Naive thymus-derived CD4-positive, alpha-beta T cell (primary cell): ENCODE measurements at regions of chr2 and their contacts with region 1.

Region 1: DNA sequence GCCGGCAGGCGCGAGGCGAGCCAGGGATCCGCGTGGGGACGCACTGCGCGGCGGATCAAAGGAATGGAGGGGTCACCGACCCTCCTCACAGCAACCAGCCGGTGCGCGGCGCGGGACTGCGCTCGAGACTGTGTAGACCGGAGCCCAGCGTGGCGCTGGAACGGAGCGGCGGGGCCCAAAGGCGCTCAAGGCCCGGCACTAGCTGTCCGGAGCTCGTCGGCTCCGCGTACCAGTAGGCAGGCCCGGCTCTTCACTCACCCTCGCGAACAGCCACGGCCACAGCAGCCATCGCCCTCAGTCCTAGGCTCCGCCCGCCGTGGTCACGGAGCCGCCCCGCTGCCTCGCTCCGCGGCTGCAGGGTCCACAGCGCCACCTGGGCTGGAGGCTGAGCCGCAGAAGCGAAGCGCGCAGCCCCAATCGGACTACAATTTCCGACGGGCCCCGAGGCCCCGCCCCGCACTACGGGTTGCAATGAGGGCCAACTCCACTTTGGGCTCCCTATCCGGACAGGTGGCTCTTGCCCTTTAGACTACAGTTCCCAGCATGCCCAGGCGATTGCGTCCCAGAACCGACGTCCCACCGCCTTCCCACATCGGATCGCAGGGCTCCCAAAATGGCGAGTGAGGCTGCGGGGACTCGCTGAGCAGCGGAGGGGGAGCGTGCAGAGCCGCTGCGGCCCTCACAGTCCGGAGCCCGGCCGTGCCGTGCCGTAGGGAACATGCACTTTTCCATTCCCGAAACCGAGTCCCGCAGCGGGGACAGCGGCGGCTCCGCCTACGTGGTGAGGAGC is at the starts of genes EIF2B4 and SNX17:
- DNase-seq: peak; percentile 96 to 100 (median 99)
- ATAC-seq: peak; percentile 96
- H3K4me3 ChIP-seq: peak within 1 kb of the TSS; percentile 94
- H3K4me3 Mint-ChIP-seq: peak within 1 kb of the TSS; percentile 85 to 100 (median 96)
- H3K27ac ChIP-seq: peak within 1 kb of the TSS; percentile 93
- H3K27ac Mint-ChIP-seq: peak within 1 kb of the TSS; percentile 81 to 99 (median 95)
- H3K4me1 ChIP-seq: peaks cover 29 to 30% of the 10 kb centered on the region in 2 donors
- H3K4me1 Mint-ChIP-seq: peaks cover 29 to 53% (median 46%) of the 10 kb centered on the region in 7 donors
- H3K27me3 ChIP-seq: no peaks in the 10 kb centered on the region
- H3K27me3 Mint-ChIP-seq: no peaks in the 10 kb centered on the region
- total RNA-seq, gene EIF2B4: 36.5 to 56.1 (median 44.1) TPM
- total RNA-seq, gene SNX17: 71.0 to 128 (median 111) TPM

Region 2: GRCh38 chr2:26785431-26786206 is 584.6 kb before region 1 on chr2 and contains the start of gene CENPA:
- CTCF ChIA-PET with region 1: no interaction called
- POLR2A ChIA-PET with region 1: no interaction called
- intact Hi-C with region 1: loop called in 1 of 2 experiments (anchors 1 kb)
- DNase-seq: peak; percentile 86 to 98 (median 96)
- ATAC-seq: peak; percentile 100
- H3K4me3 ChIP-seq: peak within 1 kb of the TSS; percentile 78
- H3K4me3 Mint-ChIP-seq: peak within 1 kb of the TSS; percentile 81 to 97 (median 88)
- H3K27ac ChIP-seq: peak within 1 kb of the TSS; percentile 60
- H3K27ac Mint-ChIP-seq: peak within 1 kb of the TSS; percentile 65 to 97 (median 89)
- H3K4me1 ChIP-seq: peaks cover 0 to 4% of the 10 kb centered on the region in 2 donors
- H3K4me1 Mint-ChIP-seq: peaks cover 10 to 34% (median 11%) of the 10 kb centered on the region in 7 donors
- H3K27me3 ChIP-seq: no peaks in the 10 kb centered on the region
- H3K27me3 Mint-ChIP-seq: peaks cover 0 to 26% (median 24%) of the 10 kb centered on the region in 5 donors
- total RNA-seq, gene CENPA: 0.37 to 25.6 (median 0.73) TPM in 3 of 5 experiments, not detected in the others

Region 3: GRCh38 chr2:27086090-27086723 is 284.0 kb before region 1 on chr2:
- CTCF ChIA-PET with region 1: no interaction called
- POLR2A ChIA-PET with region 1: interaction called, 3 read pairs
- intact Hi-C with region 1: loop called (anchors 1 to 2 kb)
- DNase-seq: peak; percentile 94 to 100 (median 99)
- ATAC-seq: peak; percentile 96
- H3K4me3 ChIP-seq: peak overlapping the region; percentile 68
- H3K4me3 Mint-ChIP-seq: peak overlapping the region; percentile 75 to 91 (median 86)
- H3K27ac ChIP-seq: peak overlapping the region; percentile 90
- H3K27ac Mint-ChIP-seq: peak overlapping the region; percentile 30 to 91 (median 78)
- H3K4me1 ChIP-seq: peaks cover 18 to 22% of the 10 kb centered on the region in 2 donors
- H3K4me1 Mint-ChIP-seq: peaks cover 13 to 47% (median 29%) of the 10 kb centered on the region in 7 donors
- H3K27me3 ChIP-seq: no peaks in the 10 kb centered on the region
- H3K27me3 Mint-ChIP-seq: no peaks in the 10 kb centered on the region

Region 4: GRCh38 chr2:27264753-27265535 is 105.3 kb before region 1 on chr2:
- CTCF ChIA-PET with region 1: no interaction called
- POLR2A ChIA-PET with region 1: no interaction called
- intact Hi-C with region 1: loop called in 1 of 2 experiments (anchors 1 kb)
- DNase-seq: peak in 8 of 9 donors; percentile 39 to 63 (median 46)
- ATAC-seq: peak; percentile 85
- H3K4me3 ChIP-seq: peak overlapping the region; percentile 59
- H3K4me3 Mint-ChIP-seq: peak overlapping the region in 9 of 10 donors; percentile 59 to 97 (median 85)
- H3K27ac ChIP-seq: no peak overlapping the region
- H3K27ac Mint-ChIP-seq: peak overlapping the region in 2 of 9 donors; percentile 2 to 38
- H3K4me1 ChIP-seq: peaks cover 8 to 23% of the 10 kb centered on the region in 2 donors
- H3K4me1 Mint-ChIP-seq: peaks cover 23 to 33% (median 29%) of the 10 kb centered on the region in 7 donors
- H3K27me3 ChIP-seq: peaks cover 6 to 18% of the 10 kb centered on the region in 2 donors
- H3K27me3 Mint-ChIP-seq: peaks cover 34 to 47% (median 40%) of the 10 kb centered on the region in 5 donors

Region 5: DNA sequence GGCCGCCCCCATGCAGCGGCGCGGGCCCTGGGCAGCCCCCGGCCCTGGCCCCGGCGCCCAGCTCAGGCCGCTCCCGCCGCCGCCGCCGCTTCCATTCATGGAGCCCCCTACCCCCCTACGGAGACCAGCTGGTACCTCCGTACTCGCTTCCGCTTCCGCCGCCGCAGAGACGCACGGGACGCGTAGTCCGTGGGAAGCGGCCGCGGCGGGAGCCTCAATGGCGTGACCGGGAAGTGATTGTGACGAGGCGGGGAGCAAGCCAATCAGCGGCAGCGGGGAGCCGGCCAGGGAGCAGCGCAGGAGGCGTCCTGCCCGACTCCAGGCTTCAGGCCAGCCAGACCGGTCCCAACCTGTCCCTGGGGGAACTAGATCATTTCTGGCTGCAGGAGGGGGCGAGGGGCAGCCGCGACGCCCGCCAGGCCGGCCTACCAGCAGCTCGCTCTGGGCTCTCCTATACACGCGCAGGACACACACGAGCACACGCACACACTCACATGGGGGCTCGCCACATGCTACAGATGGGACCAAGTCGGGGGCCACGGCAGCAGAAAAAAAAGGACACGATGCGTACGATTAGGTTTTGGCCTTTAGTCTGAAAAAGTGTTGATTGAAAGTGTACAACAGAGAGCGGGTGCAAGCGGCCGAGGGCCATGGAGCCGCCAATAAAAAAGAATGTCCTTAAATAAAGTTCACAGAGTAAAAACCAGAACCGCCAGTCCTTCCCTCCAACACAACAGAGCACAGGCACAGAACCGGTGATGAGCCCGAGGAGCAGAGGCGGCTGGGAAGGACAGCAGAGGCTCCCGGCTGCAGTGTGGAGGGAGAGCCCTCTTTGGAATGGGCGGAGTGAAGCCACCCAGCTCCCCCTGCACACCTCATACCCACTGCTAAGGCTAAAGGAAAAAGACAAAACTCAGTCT is 10.7 kb after region 1 on chr2 and contains the start of gene ZNF513:
- CTCF ChIA-PET with region 1: interaction called, 10 read pairs
- POLR2A ChIA-PET with region 1: interaction called, 67 read pairs
- intact Hi-C with region 1: loop called (anchors 1 kb)
- DNase-seq: peak; percentile 71 to 88 (median 81)
- ATAC-seq: peak; percentile 97
- H3K4me3 ChIP-seq: peak within 1 kb of the TSS; percentile 67
- H3K4me3 Mint-ChIP-seq: peak within 1 kb of the TSS; percentile 85 to 94 (median 90)
- H3K27ac ChIP-seq: peak within 1 kb of the TSS; percentile 85
- H3K27ac Mint-ChIP-seq: peak within 1 kb of the TSS; percentile 88 to 97 (median 94)
- H3K4me1 ChIP-seq: peaks cover 9 to 10% of the 10 kb centered on the region in 2 donors
- H3K4me1 Mint-ChIP-seq: peaks cover 18 to 33% (median 30%) of the 10 kb centered on the region in 7 donors
- H3K27me3 ChIP-seq: no peaks in the 10 kb centered on the region
- H3K27me3 Mint-ChIP-seq: no peaks in the 10 kb centered on the region
- total RNA-seq, gene ZNF513: 15.6 to 23.2 (median 19.2) TPM

Region 6: DNA sequence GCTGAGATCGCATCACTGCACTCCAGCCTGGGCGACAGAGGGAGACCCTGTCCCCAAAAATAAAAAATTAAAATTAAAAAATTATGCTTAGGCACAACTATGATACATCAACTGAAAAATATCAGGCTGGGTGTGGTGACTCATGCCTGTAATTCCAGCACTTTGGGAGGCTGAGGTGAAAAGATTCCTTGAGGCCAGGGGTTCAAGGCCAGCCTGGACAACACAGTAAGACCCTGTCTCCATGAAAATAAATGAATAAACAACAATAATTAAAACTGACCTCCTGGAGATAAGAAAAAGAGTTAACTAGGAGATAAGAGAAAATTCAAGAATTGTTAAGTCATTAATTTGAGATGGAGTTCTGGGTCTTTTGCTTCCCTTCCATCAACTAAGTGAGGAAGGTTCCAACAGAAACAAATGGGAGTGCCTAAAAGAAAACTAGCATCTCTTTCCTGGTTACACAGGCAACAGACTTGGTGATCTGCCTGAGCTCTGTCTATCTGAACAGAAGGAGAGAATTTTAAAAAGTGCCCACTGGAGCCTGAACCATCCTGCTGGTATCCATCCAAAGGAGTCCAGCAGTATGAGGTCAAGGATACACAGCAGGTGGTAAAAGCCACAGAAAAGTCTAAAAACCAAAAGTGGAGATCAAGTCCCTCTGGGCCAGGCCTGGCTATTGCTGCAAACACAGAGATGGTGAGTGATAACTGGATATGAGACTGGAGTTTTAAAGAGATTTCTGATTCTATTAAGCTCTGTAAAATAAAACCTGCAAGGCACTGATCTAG is 30.3 kb after region 1 on chr2:
- CTCF ChIA-PET with region 1: no interaction called
- POLR2A ChIA-PET with region 1: no interaction called
- intact Hi-C with region 1: no loop called
- DNase-seq: no peak
- ATAC-seq: no peak
- H3K4me3 ChIP-seq: no peak overlapping the region
- H3K4me3 Mint-ChIP-seq: peak overlapping the region in 3 of 10 donors; percentile 2 to 43 (median 28)
- H3K27ac ChIP-seq: no peak overlapping the region
- H3K27ac Mint-ChIP-seq: peak overlapping the region in 6 of 9 donors; percentile 36 to 77 (median 58)
- H3K4me1 ChIP-seq: peaks cover 0 to 3% of the 10 kb centered on the region in 2 donors
- H3K4me1 Mint-ChIP-seq: peaks cover 15 to 62% (median 50%) of the 10 kb centered on the region in 7 donors
- H3K27me3 ChIP-seq: no peaks in the 10 kb centered on the region
- H3K27me3 Mint-ChIP-seq: no peaks in the 10 kb centered on the region

Region 7: DNA sequence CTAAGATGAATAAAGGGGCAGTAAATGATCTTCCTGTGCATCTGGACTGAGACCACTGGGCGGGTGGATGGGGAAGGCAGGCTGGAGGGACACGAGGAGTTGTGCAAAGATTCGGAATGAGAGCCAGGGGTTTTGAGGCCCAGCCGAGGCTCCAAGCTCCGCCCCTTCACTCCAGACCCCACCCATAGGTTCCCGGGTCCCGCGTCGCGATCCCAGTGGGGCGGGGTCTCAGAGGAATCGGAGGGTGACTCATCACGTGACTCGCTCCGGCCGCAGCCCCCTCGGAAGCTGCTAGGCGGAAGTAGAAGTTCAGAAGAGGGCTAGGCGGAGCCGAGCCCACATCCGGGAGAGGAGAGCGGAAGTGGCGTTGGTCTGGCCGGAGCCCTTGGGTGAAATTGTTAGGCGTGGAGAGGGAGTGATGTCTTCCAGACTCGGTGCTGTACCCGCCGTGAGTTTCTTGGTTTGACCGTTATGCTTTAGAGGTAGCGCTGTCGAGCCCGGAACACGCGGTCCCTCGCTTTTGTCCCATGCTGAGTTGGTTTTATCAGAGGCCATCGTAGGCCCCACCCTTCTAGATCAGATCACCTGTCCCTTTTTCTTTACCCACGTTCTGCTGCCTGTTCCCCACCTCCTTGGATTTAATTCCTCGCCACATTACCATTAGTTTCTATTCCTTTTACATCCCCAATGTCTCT is 212.6 kb after region 1 on chr2 and contains the start of gene ZNF512:
- CTCF ChIA-PET with region 1: no interaction called
- POLR2A ChIA-PET with region 1: no interaction called
- intact Hi-C with region 1: loop called in 1 of 2 experiments (anchors 2 kb)
- DNase-seq: peak; percentile 44 to 76 (median 70)
- ATAC-seq: peak; percentile 92
- H3K4me3 ChIP-seq: peak within 1 kb of the TSS; percentile 75
- H3K4me3 Mint-ChIP-seq: peak within 1 kb of the TSS; percentile 90 to 100 (median 95)
- H3K27ac ChIP-seq: peak within 1 kb of the TSS; percentile 84
- H3K27ac Mint-ChIP-seq: peak within 1 kb of the TSS; percentile 85 to 98 (median 94)
- H3K4me1 ChIP-seq: peaks cover 22 to 35% of the 10 kb centered on the region in 2 donors
- H3K4me1 Mint-ChIP-seq: peaks cover 37 to 60% (median 53%) of the 10 kb centered on the region in 7 donors
- H3K27me3 ChIP-seq: no peaks in the 10 kb centered on the region
- H3K27me3 Mint-ChIP-seq: peaks cover 0 to 16% (median 0%) of the 10 kb centered on the region in 5 donors
- total RNA-seq, gene ZNF512: 26.6 to 64.6 (median 50.1) TPM